ENCODE measurements at regions of chr1 and their contacts with region 1.

Region 1: GRCh38 chr1:37509181-37509580 is 5.4 kb downstream of the MEAF6 start:
- DNase-seq: no peak
- H3K4me3 ChIP-seq: no peak overlapping the region
- H3K27ac ChIP-seq: no peak overlapping the region
- H3K4me1 ChIP-seq: peaks cover 8% of the 10 kb centered on the region
- H3K27me3 ChIP-seq: no peaks in the 10 kb centered on the region
- CTCF ChIP-seq: no peak
- EP300 ChIP-seq: no peak
- POLR2A ChIP-seq: no peak

Region 2: GRCh38 chr1:36068883-36069282 is 1440.3 kb before region 1 on chr1:
- intact Hi-C with region 1: loop called in 1 of 4 experiments (anchors 5 kb)
- DNase-seq: no peak
- H3K4me3 ChIP-seq: no peak overlapping the region
- H3K27ac ChIP-seq: no peak overlapping the region
- H3K4me1 ChIP-seq: no peaks in the 10 kb centered on the region
- H3K27me3 ChIP-seq: no peaks in the 10 kb centered on the region
- CTCF ChIP-seq: no peak
- EP300 ChIP-seq: no peak
- POLR2A ChIP-seq: no peak

Region 3: GRCh38 chr1:37811027-37811655 is 302.0 kb after region 1 on chr1:
- intact Hi-C with region 1: no loop called
- DNase-seq: peak in 2 of 5 donors; percentile 56 to 62
- H3K4me3 ChIP-seq: no peak overlapping the region
- H3K27ac ChIP-seq: no peak overlapping the region
- H3K4me1 ChIP-seq: peaks cover 10% of the 10 kb centered on the region
- H3K27me3 ChIP-seq: no peaks in the 10 kb centered on the region
- CTCF ChIP-seq: peak in 1 of 3 donors; percentile 33
- EP300 ChIP-seq: no peak
- POLR2A ChIP-seq: no peak

Measured in ovary (tissue), 10 donors.